Heart left ventricle (tissue), 16 donors: ENCODE measurements at regions of chr3 and their contacts with region 1.

Region 1: DNA sequence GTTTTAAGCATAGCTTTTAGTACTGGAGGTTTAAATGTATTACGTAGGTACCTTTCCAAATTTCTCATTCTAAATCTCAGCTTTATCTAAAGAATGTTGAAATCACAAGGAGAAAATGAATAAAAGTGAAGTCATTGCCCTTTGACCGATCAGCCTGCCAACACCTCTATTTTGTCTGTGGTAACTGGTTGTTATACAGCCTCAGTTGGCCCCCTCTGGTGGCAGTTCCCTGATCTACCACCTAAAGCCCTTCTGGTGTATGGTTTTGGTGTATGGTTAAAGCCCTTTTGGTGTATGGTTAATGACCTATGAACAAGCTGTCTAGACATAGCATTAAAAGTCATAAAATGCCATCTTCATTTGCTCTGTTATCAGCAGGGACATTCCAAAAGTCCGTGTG is 378.2 kb upstream of the AZI2 start:
- DNase-seq: peak in 4 of 5 donors; percentile 17 to 60 (median 43)
- ATAC-seq: peak; percentile 66 to 84 (median 73)
- H3K4me3 ChIP-seq: no peak overlapping the region
- H3K27ac ChIP-seq: no peak overlapping the region
- H3K4me1 ChIP-seq: no peaks in the 10 kb centered on the region
- H3K27me3 ChIP-seq: no peaks in the 10 kb centered on the region
- CTCF ChIP-seq: peak; percentile 19 to 63 (median 49)
- POLR2A ChIP-seq: no peak

Region 2: GRCh38 chr3:28476194-28476593 is 250.6 kb before region 1 on chr3:
- intact Hi-C with region 1: loop called in 8 of 10 experiments (anchors 2 to 10 kb)
- DNase-seq: no peak
- ATAC-seq: peak in 1 of 4 donors; percentile 56
- H3K4me3 ChIP-seq: no peak overlapping the region
- H3K27ac ChIP-seq: no peak overlapping the region
- H3K4me1 ChIP-seq: no peaks in the 10 kb centered on the region
- H3K27me3 ChIP-seq: no peaks in the 10 kb centered on the region
- CTCF ChIP-seq: peak; percentile 43 to 77 (median 56)
- POLR2A ChIP-seq: no peak

Region 3: GRCh38 chr3:28485164-28485563 is 241.7 kb before region 1 on chr3:
- intact Hi-C with region 1: loop called in 1 of 10 experiments (anchors 10 kb)
- DNase-seq: no peak
- ATAC-seq: no peak
- H3K4me3 ChIP-seq: no peak overlapping the region
- H3K27ac ChIP-seq: no peak overlapping the region
- H3K4me1 ChIP-seq: no peaks in the 10 kb centered on the region
- H3K27me3 ChIP-seq: no peaks in the 10 kb centered on the region
- CTCF ChIP-seq: no peak
- POLR2A ChIP-seq: no peak

Region 4: DNA sequence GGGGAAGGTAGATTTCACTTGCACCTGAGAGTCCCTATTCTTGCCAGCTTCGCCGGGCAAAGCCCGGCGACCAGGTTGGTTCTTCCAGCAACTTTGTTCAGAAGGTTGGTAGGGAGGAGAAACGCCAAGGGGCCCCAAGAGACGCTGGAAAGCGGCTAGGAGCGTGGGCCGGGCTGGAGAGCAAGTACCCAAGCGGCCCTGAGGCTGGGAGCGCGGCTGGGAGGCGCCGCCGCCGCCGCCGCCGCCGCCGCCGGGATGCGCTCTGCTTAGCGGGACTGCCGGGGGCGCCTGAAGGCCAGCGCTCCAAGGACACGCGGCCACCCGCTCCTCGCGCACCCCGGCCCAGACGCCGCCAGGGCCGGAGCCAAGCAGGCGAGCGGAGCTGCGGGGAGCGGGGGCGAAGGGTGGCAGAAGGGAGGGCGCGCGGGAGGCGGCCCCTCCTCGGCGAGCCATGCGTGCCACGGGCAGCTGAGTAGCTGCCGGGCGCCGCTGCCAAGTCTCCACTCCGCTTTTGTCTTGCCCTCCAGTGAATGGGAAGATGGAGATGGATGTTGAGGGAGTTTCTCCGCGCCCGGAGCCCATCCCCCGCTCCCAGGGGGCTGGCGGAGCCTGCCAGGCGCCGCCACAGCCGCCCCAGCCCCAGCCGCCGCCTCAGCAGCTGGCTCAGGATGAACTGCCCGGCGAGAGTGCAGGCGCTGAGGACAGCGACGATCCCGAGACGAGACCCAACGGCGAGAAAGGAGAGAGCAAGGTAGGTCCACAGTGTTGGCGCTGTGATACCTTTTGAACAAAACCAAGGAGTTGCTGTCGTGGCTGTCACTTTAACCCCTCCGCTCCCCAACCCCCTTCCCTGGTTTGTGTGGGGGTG is 150.9 kb before region 1 on chr3:
- intact Hi-C with region 1: loop called in 1 of 10 experiments (anchors 10 kb)
- DNase-seq: peak; percentile 6 to 58 (median 26)
- ATAC-seq: peak in 3 of 4 donors; percentile 64 to 90 (median 85)
- H3K4me3 ChIP-seq: peak overlapping the region; percentile 22 to 72 (median 57)
- H3K27ac ChIP-seq: no peak overlapping the region
- H3K4me1 ChIP-seq: peaks cover 0 to 19% (median 2%) of the 10 kb centered on the region in 12 donors
- H3K27me3 ChIP-seq: peaks cover 0 to 38% (median 0%) of the 10 kb centered on the region in 9 donors
- CTCF ChIP-seq: peak in 1 of 12 donors; percentile 15
- POLR2A ChIP-seq: no peak

Region 5: DNA sequence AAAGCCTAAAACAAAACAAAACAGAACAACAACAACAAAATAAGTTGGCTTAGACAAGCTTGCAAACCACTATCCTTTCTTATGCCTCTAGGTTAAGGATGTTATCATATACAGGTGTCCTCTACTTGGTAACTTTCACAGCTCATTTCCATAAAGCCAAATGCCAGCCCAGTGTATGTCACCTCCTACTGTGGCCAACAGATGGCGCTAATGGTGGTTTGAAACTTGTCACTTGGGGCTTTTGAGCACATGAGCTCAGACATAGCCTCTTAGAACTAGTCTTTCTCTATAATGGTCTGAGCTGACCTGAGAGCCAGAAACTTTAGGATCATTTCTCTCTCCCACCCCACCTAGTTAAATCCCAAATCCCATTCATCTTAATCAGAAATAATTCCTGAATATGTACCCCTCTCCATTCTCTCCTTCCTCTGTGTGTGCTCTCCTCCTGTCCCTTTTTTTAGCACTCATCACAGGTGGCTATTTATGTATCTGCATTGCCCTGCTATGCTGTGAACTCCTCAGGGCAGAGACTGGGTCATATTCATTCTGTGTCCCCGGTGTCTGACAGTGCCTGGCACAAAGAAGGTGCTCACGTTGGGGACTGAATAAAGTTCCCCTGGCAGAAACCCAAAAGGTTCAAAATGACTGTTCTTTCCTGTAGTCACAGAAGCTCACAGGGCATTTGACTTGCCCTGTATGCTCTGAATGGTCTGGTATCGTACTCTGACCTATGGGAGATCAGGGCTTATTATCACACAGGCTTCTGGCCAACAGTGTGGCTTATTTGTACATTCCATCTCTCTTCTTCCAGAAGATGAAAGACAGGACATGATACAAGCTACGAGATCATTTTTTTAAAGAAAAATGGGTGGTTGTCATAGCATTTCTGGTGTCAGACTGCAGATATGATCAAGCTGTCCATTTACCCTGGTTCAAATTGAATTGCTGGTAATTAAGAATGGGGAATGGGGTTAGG is 58.9 kb before region 1 on chr3:
- intact Hi-C with region 1: loop called in 3 of 10 experiments (anchors 2 to 10 kb)
- DNase-seq: peak in 4 of 5 donors; percentile 46 to 60 (median 57)
- ATAC-seq: peak; percentile 91 to 95 (median 94)
- H3K4me3 ChIP-seq: peak overlapping the region in 1 of 12 donors; percentile 11
- H3K27ac ChIP-seq: peak overlapping the region; percentile 2 to 79 (median 54)
- H3K4me1 ChIP-seq: peaks cover 0 to 16% (median 0%) of the 10 kb centered on the region in 12 donors
- H3K27me3 ChIP-seq: no peaks in the 10 kb centered on the region
- CTCF ChIP-seq: peak; percentile 74 to 87 (median 78)
- POLR2A ChIP-seq: no peak

Region 6: GRCh38 chr3:28677581-28677980 is 49.3 kb before region 1 on chr3:
- intact Hi-C with region 1: loop called in 1 of 10 experiments (anchors 10 kb)
- DNase-seq: peak in 1 of 5 donors; percentile 40
- ATAC-seq: no peak
- H3K4me3 ChIP-seq: no peak overlapping the region
- H3K27ac ChIP-seq: no peak overlapping the region
- H3K4me1 ChIP-seq: peaks cover 0 to 3% (median 0%) of the 10 kb centered on the region in 12 donors
- H3K27me3 ChIP-seq: no peaks in the 10 kb centered on the region
- CTCF ChIP-seq: no peak
- POLR2A ChIP-seq: no peak

Region 7: GRCh38 chr3:28951773-28952556 is 225.1 kb after region 1 on chr3:
- intact Hi-C with region 1: no loop called
- DNase-seq: no peak
- ATAC-seq: no peak
- H3K4me3 ChIP-seq: no peak overlapping the region
- H3K27ac ChIP-seq: no peak overlapping the region
- H3K4me1 ChIP-seq: peaks cover 0 to 5% (median 0%) of the 10 kb centered on the region in 12 donors
- H3K27me3 ChIP-seq: no peaks in the 10 kb centered on the region
- CTCF ChIP-seq: no peak
- POLR2A ChIP-seq: no peak